ENCODE measurements at regions of chr6 and their contacts with region 1.

Region 1: GRCh38 chr6:26342106-26343004 is 22.6 kb upstream of the BTN3A2 start:
- DNase-seq: no peak
- H3K4me3 ChIP-seq: peak overlapping the region; percentile 39 to 40
- H3K4me3 Mint-ChIP-seq: peak overlapping the region; percentile 68 to 86 (median 86)
- H3K27ac ChIP-seq: no peak overlapping the region
- H3K27ac Mint-ChIP-seq: peak overlapping the region in 5 of 7 donors; percentile 42 to 91 (median 52)
- H3K4me1 ChIP-seq: peaks cover 11% of the 10 kb centered on the region
- H3K4me1 Mint-ChIP-seq: peaks cover 6 to 8% (median 7%) of the 10 kb centered on the region in 4 donors
- H3K27me3 ChIP-seq: no peaks in the 10 kb centered on the region
- H3K27me3 Mint-ChIP-seq: no peaks in the 10 kb centered on the region

Region 2: DNA sequence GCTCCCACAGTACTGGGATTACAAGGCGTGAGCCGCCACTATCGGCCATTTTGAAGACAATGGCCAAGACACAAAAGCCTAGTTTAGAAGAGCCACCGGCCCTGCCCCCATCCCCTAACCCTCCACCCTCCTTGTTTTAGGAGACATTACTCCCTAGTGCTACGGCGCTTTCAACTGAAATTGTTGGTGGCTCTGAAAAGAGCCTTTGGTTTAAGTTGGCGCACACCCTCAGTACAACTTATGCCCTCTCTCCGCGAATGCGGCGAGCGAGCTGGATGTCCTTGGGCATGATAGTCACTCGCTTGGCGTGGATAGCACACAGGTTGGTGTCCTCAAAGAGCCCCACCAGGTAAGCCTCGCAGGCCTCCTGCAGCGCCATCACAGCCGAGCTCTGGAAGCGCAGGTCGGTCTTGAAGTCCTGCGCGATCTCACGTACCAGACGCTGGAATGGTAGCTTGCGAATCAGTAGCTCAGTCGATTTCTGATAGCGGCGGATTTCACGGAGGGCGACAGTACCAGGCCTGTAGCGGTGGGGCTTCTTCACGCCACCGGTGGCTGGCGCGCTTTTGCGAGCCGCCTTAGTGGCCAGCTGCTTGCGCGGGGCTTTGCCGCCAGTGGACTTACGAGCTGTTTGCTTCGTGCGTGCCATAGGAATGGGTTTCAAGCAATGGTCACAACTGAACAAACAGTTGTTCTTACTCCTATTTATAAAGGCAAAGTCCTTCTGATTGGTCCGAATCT is 92.2 kb before region 1 on chr6:
- CTCF ChIA-PET with region 1: no interaction called
- POLR2A ChIA-PET with region 1: no interaction called
- intact Hi-C with region 1: no loop called
- DNase-seq: peak; percentile 79 to 88 (median 83)
- H3K4me3 ChIP-seq: peak overlapping the region; percentile 86 to 88
- H3K4me3 Mint-ChIP-seq: peak overlapping the region; percentile 92 to 99 (median 98)
- H3K27ac ChIP-seq: peak overlapping the region; percentile 59
- H3K27ac Mint-ChIP-seq: peak overlapping the region; percentile 85 to 97 (median 94)
- H3K4me1 ChIP-seq: peaks cover 25% of the 10 kb centered on the region
- H3K4me1 Mint-ChIP-seq: peaks cover 28 to 53% (median 40%) of the 10 kb centered on the region in 4 donors
- H3K27me3 ChIP-seq: no peaks in the 10 kb centered on the region
- H3K27me3 Mint-ChIP-seq: no peaks in the 10 kb centered on the region

Region 3: DNA sequence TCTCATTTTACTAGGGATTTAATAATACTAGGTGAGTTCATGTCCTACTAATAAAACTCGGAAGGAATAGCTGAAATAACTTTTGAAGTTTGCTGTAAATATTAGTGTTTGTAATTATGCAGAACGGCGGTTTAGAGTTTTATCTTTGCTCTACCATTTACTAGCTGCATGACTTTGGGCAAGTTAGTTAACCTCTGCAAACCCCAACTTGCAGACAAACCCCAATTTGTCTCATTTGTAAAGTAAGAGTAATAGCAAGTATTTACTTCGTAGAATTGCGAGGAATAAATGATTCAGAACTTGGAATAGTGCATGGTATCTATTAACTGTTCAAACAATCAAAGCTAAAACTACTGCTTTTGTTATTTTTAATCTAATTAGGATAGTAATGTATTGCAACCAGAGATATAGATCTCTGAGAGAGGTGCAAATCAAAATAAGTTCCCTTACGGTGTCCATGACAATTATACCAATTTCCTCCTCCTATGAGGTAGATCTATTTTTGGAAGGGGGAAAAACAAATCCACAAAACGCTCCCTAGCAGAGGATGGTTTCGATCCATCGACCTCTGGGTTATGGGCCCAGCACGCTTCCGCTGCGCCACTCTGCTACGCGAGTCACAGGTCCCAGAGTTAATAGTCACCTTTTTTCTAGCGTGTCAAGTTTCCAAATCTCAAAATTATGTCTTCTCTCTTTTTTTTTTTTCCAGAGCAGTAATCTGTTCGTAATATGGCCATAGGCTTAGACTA is 12.4 kb before region 1 on chr6:
- CTCF ChIA-PET with region 1: interaction called, 14 read pairs
- POLR2A ChIA-PET with region 1: interaction called, 4 read pairs
- intact Hi-C with region 1: no loop called
- DNase-seq: peak; percentile 51 to 66 (median 62)
- H3K4me3 ChIP-seq: no peak overlapping the region
- H3K4me3 Mint-ChIP-seq: peak overlapping the region; percentile 63 to 86 (median 82)
- H3K27ac ChIP-seq: no peak overlapping the region
- H3K27ac Mint-ChIP-seq: peak overlapping the region; percentile 42 to 98 (median 93)
- H3K4me1 ChIP-seq: peaks cover 32% of the 10 kb centered on the region
- H3K4me1 Mint-ChIP-seq: peaks cover 29 to 43% (median 32%) of the 10 kb centered on the region in 4 donors
- H3K27me3 ChIP-seq: peaks cover 7% of the 10 kb centered on the region
- H3K27me3 Mint-ChIP-seq: peaks cover 15 to 38% of the 10 kb centered on the region in 2 donors

Region 4: DNA sequence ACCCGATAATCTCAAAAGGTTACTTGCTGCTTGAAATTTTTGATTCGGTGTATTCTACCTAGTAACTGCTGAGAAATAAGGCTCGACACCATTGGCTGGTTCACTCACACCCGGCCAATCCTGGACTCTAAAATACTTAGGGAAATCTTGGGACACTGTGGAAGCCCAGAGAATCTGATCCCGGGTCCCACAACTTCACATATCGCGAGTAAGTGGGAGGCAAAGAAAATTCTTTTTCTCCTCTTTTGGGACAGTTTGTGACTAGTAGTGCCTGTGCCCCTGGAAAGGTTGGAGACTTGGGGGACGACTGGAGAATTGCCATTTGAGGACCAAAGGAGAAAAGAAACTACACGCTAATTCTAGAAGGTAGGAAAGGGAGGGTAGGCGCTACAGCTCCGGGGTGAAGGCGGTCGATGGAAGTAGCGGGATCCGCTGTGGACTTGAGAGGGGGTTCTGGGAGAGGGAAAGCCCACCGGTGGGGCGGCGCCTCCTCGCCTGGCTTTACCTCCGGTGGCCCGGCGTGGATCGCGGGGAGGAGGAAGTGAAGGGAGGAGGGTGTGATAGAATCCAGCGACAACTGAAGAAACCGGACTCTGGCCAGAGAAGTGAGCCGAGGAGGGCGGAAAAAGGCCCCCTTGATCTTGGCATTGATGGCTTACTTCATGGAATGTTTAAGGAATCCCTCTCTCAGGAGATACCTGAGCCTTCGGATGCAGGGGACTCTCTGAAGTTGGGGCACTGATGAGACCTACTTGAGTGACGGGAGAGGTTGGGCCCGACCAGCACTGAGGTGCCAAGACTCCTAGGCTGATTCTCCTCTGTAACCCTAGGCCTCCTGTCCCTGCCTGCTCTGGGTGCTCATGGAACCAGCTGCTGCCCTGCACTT is 79.1 kb after region 1 on chr6:
- CTCF ChIA-PET with region 1: interaction called, 7 read pairs
- POLR2A ChIA-PET with region 1: interaction called, 4 read pairs
- intact Hi-C with region 1: loop called (anchors 1 kb)
- DNase-seq: peak; percentile 63 to 69 (median 67)
- H3K4me3 ChIP-seq: peak overlapping the region; percentile 86 to 97
- H3K4me3 Mint-ChIP-seq: no peak overlapping the region
- H3K27ac ChIP-seq: peak overlapping the region; percentile 65
- H3K27ac Mint-ChIP-seq: peak overlapping the region in 1 of 7 donors; percentile 90
- H3K4me1 ChIP-seq: peaks cover 10% of the 10 kb centered on the region
- H3K4me1 Mint-ChIP-seq: peaks cover 2 to 12% (median 5%) of the 10 kb centered on the region in 4 donors
- H3K27me3 ChIP-seq: no peaks in the 10 kb centered on the region
- H3K27me3 Mint-ChIP-seq: no peaks in the 10 kb centered on the region

Region 5: GRCh38 chr6:26439151-26439550 is 96.8 kb after region 1 on chr6:
- CTCF ChIA-PET with region 1: no interaction called
- POLR2A ChIA-PET with region 1: no interaction called
- intact Hi-C with region 1: no loop called
- DNase-seq: no peak
- H3K4me3 ChIP-seq: no peak overlapping the region
- H3K4me3 Mint-ChIP-seq: peak overlapping the region in 6 of 8 donors; percentile 93 to 100 (median 98)
- H3K27ac ChIP-seq: peak overlapping the region; percentile 97
- H3K27ac Mint-ChIP-seq: peak overlapping the region; percentile 97 to 100 (median 99)
- H3K4me1 ChIP-seq: peaks cover 32% of the 10 kb centered on the region
- H3K4me1 Mint-ChIP-seq: peaks cover 18 to 50% (median 40%) of the 10 kb centered on the region in 4 donors
- H3K27me3 ChIP-seq: no peaks in the 10 kb centered on the region
- H3K27me3 Mint-ChIP-seq: no peaks in the 10 kb centered on the region

Region 6: DNA sequence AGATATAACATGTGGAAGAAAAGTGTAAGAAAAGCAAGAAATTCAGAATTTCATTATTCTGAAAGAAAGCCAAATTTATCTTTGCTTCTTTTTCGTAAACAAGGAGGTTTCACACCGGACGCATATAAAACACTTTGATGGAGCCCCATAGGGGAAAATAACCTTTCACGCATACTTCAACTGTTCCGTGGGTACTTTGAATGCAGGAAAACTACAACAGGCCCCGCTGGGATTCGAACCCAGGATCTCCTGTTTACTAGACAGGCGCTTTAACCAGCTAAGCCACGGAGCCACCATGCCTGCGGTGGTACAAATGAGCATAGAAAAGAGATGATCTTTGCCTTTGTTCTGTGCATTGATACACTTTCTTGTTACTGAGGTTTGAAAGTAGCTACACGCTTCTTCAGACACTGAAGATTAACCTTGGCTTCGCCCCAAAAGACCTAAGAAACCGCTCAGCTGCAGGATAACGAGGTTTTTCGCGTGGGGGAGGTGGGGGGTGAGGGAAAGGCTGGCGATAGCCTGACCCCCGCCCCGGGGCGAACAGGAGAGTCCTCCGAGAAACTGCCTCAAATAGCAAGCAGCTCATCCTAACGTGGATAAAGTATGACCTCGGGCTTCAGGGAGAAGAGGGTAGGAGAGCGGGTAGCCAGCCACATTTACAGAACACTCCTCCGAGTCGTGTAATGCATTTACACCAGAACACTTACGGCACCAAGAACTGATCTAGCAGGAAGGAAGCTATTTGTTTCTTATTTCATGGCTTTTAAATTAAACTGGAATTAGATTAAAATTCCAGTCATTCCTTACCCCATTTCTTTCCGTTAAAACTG is 190.6 kb after region 1 on chr6:
- CTCF ChIA-PET with region 1: interaction called, 10 read pairs
- POLR2A ChIA-PET with region 1: interaction called, 10 read pairs
- intact Hi-C with region 1: loop called (anchors 1 kb)
- DNase-seq: peak; percentile 90 to 94 (median 91)
- H3K4me3 ChIP-seq: peak overlapping the region; percentile 86 to 93
- H3K4me3 Mint-ChIP-seq: peak overlapping the region; percentile 94 to 99 (median 96)
- H3K27ac ChIP-seq: peak overlapping the region; percentile 74
- H3K27ac Mint-ChIP-seq: peak overlapping the region; percentile 91 to 99 (median 96)
- H3K4me1 ChIP-seq: peaks cover 41% of the 10 kb centered on the region
- H3K4me1 Mint-ChIP-seq: peaks cover 33 to 51% (median 40%) of the 10 kb centered on the region in 4 donors
- H3K27me3 ChIP-seq: no peaks in the 10 kb centered on the region
- H3K27me3 Mint-ChIP-seq: peaks cover 6 to 9% of the 10 kb centered on the region in 2 donors

Region 7: DNA sequence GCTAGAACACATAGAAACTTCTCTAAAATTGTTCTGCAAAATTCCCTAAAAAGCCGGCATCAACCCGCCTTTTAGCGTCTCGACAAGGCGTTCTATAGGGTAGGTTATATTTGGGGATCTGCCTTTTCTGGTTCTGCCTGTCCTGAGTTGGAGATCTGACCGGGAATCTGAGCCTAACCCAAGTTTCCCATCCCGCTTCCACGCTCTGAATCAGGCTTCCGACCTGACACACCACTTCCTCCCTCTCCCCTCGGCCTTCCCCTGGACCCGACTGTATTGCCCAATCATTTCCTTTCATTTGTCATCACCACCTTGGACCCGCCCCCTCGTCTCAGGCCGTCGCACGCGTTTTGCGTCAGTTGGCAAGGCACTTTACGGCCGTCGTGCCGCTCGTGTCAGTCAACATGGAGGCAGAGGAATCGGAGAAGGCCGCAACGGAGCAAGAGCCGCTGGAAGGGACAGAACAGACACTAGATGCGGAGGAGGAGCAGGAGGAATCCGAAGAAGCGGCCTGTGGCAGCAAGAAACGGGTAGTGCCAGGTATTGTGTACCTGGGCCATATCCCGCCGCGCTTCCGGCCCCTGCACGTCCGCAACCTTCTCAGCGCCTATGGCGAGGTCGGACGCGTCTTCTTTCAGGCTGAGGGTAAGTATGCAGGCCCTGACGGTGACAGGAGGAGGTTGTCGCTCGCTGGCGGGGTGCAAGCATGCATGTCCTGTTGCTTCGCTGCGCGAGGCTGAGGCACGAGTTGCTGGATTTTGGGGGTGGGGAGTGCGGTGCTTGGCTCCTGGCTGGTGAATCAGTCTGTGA is 254.4 kb after region 1 on chr6 and contains the start of gene ABT1:
- CTCF ChIA-PET with region 1: interaction called, 114 read pairs
- POLR2A ChIA-PET with region 1: interaction called, 13 read pairs
- intact Hi-C with region 1: loop called (anchors 1 kb)
- DNase-seq: peak; percentile 95 to 98 (median 96)
- H3K4me3 ChIP-seq: peak within 1 kb of the TSS; percentile 76 to 98
- H3K4me3 Mint-ChIP-seq: no peak within 1 kb of the TSS
- H3K27ac ChIP-seq: peak within 1 kb of the TSS; percentile 91
- H3K27ac Mint-ChIP-seq: peak within 1 kb of the TSS in 3 of 7 donors; percentile 80 to 92 (median 88)
- H3K4me1 ChIP-seq: peaks cover 24% of the 10 kb centered on the region
- H3K4me1 Mint-ChIP-seq: peaks cover 0 to 16% (median 8%) of the 10 kb centered on the region in 4 donors
- H3K27me3 ChIP-seq: no peaks in the 10 kb centered on the region
- H3K27me3 Mint-ChIP-seq: peaks cover 15 to 22% of the 10 kb centered on the region in 2 donors
- total RNA-seq, gene ABT1: 33.5 to 34.8 TPM